IMR-90 (cell line): ENCODE measurements at regions of chr14 and their contacts with region 1.

Region 1: GRCh38 chr14:75141967-75142366 is 15.1 kb upstream of the NEK9 start:
- DNase-seq: peak; percentile 56
- ATAC-seq: no peak
- H3K4me3 ChIP-seq: no peak overlapping the region
- H3K27ac ChIP-seq: no peak overlapping the region
- H3K4me1 ChIP-seq: peaks cover 2% of the 10 kb centered on the region; the same call in 1 of the 2 replicates
- H3K27me3 ChIP-seq: no peaks in the 10 kb centered on the region
- CTCF ChIP-seq: peak; percentile 55
- POLR2A ChIP-seq: no peak
- RAD21 ChIP-seq: peak; percentile 70

Region 2: GRCh38 chr14:74084277-74085046 is 1057.5 kb before region 1 on chr14 and contains the starts of genes ALDH6A1 and LIN52:
- CTCF ChIA-PET with region 1: no interaction called
- POLR2A ChIA-PET with region 1: no interaction called
- dilution Hi-C with region 1: no loop called
- in situ Hi-C with region 1: no loop called
- intact Hi-C with region 1: no loop called
- DNase-seq: peak; percentile 100
- ATAC-seq: peak; percentile 94
- H3K4me3 ChIP-seq: peak within 1 kb of the TSS; percentile 73
- H3K27ac ChIP-seq: peak within 1 kb of the TSS; percentile 48
- H3K4me1 ChIP-seq: peaks cover 2% of the 10 kb centered on the region
- H3K27me3 ChIP-seq: no peaks in the 10 kb centered on the region
- CTCF ChIP-seq: no peak
- POLR2A ChIP-seq: peak; percentile 57
- RAD21 ChIP-seq: 0 out of 2 replicates have a peak, but pooled peaks have one; percentile 4
- total RNA-seq, gene ALDH6A1: 11.9 and 15.1 TPM in 2 replicates
- total RNA-seq, gene LIN52: 8.3 and 11.5 TPM in 2 replicates

Region 3: GRCh38 chr14:75126679-75127473 is 15.1 kb before region 1 on chr14 and contains the start of gene NEK9:
- CTCF ChIA-PET with region 1: no interaction called
- POLR2A ChIA-PET with region 1: no interaction called
- dilution Hi-C with region 1: no loop called
- in situ Hi-C with region 1: no loop called
- intact Hi-C with region 1: no loop called
- DNase-seq: peak; percentile 75
- ATAC-seq: peak; percentile 90
- H3K4me3 ChIP-seq: peak within 1 kb of the TSS; percentile 91
- H3K27ac ChIP-seq: peak within 1 kb of the TSS; percentile 93
- H3K4me1 ChIP-seq: peaks cover 5% of the 10 kb centered on the region; the same call in 1 of the 2 replicates
- H3K27me3 ChIP-seq: no peaks in the 10 kb centered on the region
- CTCF ChIP-seq: no peak
- POLR2A ChIP-seq: peak; percentile 79; the same call in 1 of the 2 replicates
- RAD21 ChIP-seq: no peak; the same call in 1 of the 2 replicates
- total RNA-seq, gene NEK9: 22.9 and 31.4 TPM in 2 replicates

Region 4: GRCh38 chr14:75560962-75561432 is 419.0 kb after region 1 on chr14:
- CTCF ChIA-PET with region 1: no interaction called
- POLR2A ChIA-PET with region 1: no interaction called
- dilution Hi-C with region 1: no loop called
- in situ Hi-C with region 1: no loop called
- intact Hi-C with region 1: loop called (anchors 5 kb)
- DNase-seq: peak; percentile 67
- ATAC-seq: peak; percentile 95
- H3K4me3 ChIP-seq: no peak overlapping the region
- H3K27ac ChIP-seq: no peak overlapping the region
- H3K4me1 ChIP-seq: no peaks in the 10 kb centered on the region; the same call in 1 of the 2 replicates
- H3K27me3 ChIP-seq: peaks cover 26% of the 10 kb centered on the region
- CTCF ChIP-seq: peak; percentile 84
- POLR2A ChIP-seq: 0 out of 2 replicates have a peak, but pooled peaks have one; percentile 20
- RAD21 ChIP-seq: peak; percentile 78